Common myeloid progenitor, CD34-positive (primary cell): ENCODE measurements at regions of chr12 and their contacts with region 1.

Region 1: GRCh38 chr12:121443193-121443870 is 43.4 kb downstream of the RNF34 start:
- DNase-seq: peak; percentile 35 to 57 (median 46)
- H3K4me3 ChIP-seq: no peak overlapping the region
- H3K27ac ChIP-seq: no peak overlapping the region
- H3K4me1 ChIP-seq: no peaks in the 10 kb centered on the region
- H3K27me3 ChIP-seq: no peaks in the 10 kb centered on the region

Region 2: DNA sequence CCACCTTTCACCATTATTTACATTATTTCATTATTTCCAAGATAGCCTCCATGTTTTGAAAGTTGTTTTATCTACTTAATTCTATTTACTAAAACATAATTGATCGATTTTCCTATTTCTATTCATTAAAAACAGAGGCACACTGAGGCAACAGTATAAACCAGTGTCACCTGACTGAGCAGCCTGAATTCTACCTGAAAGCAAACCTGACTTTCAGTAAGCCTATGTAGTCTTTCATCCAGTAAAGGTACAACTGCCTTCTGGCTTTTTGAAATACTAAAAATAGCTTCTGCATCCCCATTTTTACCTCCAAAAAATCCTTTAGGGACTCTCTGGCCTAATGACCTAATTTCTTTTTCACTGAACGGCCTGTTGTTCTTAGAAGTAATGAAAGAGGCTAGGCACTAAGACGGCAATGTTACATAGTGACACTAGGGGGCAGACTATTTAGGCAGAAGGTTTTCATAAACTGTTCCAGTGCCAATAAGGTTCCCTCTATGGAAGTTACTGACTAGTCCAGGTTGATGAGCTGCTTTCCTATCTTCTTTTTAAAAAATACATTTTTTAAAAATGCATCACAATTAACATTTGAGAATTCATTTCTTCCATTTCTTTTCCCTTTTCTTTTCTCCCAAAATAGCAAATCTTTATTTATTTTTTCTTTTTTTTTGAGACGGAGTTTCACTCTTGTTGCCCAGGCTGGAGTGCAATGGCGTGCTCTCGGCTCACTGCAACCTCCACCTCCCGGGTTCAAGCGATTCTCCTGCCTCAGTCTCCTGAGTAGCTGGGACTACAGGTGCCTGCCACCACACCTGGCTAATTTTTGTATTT is 108.6 kb before region 1 on chr12:
- CTCF ChIA-PET with region 1: interaction called, 123 read pairs
- POLR2A ChIA-PET with region 1: interaction called, 3 read pairs
- DNase-seq: peak; percentile 74 to 86 (median 85)
- H3K4me3 ChIP-seq: no peak overlapping the region
- H3K27ac ChIP-seq: peak overlapping the region in 1 of 2 experiments; percentile 55
- H3K4me1 ChIP-seq: peaks cover 0 to 3% (median 0%) of the 10 kb centered on the region in 4 experiments
- H3K27me3 ChIP-seq: no peaks in the 10 kb centered on the region

Region 3: DNA sequence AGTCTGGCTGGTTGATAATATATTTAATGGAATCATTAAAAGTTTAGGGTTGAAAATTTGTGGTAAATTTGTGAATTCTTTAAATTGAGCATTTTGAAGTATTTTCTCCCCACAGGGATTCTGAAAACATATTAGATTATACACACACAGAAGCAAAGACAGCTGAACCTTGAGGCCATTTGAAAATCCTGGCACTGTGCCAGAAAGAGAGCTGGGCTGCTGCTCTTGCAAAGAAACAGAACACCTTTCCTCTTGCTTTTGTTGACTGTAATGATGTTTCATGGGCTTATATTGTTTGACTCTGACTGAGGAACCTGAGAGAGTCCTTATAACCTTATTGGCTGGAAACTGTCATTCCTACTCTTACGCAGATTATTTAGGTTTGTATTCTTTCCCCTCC is 38.6 kb before region 1 on chr12:
- CTCF ChIA-PET with region 1: interaction called, 12 read pairs
- POLR2A ChIA-PET with region 1: interaction called, 3 read pairs
- DNase-seq: peak in 2 of 3 donors; percentile 10 to 17
- H3K4me3 ChIP-seq: no peak overlapping the region
- H3K27ac ChIP-seq: no peak overlapping the region
- H3K4me1 ChIP-seq: peaks cover 7 to 16% (median 13%) of the 10 kb centered on the region in 4 experiments
- H3K27me3 ChIP-seq: no peaks in the 10 kb centered on the region

Region 4: DNA sequence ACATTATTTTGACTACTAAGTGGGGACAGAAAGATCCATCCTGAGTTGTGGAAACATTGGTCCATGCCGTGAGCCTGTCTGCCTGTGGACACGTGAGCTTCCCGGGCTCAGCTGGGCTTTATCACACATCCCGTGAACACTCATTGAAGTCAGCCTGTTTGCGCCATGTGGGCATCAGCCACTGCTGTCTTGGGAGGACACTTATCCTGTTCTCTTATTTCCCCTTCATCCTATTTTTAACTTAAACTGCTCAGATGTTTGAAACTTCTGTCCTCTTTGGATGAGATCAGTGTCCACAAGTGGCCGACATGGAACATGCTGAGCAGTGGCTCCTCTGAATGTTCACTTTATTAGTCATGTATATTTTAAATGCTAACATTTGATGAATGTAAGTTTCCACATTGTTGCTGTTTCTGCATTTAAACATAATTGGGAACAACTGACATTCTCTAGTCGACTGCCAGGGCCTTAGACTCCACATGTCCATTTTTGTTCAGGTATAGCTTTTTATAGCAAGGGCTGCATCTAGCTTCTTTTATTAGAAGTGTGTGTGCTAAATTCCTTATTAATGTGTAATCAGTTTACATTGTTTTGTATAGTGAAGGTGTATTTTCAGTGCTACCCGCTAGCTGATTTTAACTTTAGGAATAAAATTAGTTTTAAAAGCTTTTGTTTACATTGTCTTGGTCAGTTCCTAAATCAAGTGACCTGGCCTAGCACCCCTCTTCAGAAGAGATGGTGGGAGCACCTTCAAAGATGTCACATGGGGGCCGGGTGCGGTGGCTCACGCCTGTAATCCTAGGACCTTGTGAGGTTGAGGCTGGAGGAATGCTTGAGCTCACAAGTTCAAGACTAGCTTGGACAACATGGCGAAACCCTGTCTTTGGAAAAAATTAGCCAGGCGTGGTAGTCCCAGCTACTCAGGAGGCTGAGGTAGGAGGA is 19.4 kb before region 1 on chr12:
- CTCF ChIA-PET with region 1: interaction called, 18 read pairs
- POLR2A ChIA-PET with region 1: no interaction called
- DNase-seq: no peak
- H3K4me3 ChIP-seq: no peak overlapping the region
- H3K27ac ChIP-seq: no peak overlapping the region
- H3K4me1 ChIP-seq: peaks cover 0 to 26% (median 7%) of the 10 kb centered on the region in 4 experiments
- H3K27me3 ChIP-seq: no peaks in the 10 kb centered on the region

Region 5: DNA sequence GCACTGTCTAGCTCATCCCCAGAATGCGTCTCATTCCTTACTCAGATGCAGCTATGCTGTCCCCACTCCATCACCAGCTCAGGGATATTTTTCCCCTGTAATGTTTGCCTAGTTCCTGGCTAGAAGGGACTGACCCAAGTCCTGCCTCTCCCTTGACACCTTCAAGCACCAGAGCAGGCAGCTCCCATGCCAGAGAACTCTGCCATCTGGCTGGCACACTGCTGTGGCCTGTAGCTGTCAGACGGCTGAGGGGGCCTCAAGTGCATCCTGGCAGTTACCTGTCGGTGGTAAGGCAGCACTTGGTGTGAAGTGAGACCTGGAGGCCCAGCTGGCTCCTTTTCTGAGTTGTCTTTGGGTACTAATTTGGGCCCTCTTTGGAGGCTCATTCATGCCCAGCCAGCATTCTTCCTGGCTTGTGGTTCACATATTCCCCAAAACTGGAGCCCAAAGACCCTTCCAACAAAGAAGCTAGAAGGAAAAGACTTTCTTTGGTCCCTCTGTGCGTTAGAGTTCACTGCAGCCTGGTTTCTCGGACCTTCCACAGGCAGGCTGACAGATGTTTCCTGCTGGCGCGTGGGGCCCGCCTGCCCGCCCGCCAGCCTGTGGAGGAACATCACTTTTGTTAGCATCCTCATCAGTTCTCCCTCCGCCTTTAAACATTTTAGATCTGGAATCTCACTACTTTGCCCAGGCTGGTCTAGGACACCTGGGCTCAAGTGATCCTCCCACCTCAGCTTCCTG is 10.4 kb before region 1 on chr12:
- CTCF ChIA-PET with region 1: interaction called, 32 read pairs
- POLR2A ChIA-PET with region 1: no interaction called
- DNase-seq: peak in 2 of 3 donors; percentile 70 to 84
- H3K4me3 ChIP-seq: no peak overlapping the region
- H3K27ac ChIP-seq: peak overlapping the region in 1 of 2 experiments; percentile 31
- H3K4me1 ChIP-seq: peaks cover 0 to 15% (median 11%) of the 10 kb centered on the region in 4 experiments
- H3K27me3 ChIP-seq: no peaks in the 10 kb centered on the region

Region 6: DNA sequence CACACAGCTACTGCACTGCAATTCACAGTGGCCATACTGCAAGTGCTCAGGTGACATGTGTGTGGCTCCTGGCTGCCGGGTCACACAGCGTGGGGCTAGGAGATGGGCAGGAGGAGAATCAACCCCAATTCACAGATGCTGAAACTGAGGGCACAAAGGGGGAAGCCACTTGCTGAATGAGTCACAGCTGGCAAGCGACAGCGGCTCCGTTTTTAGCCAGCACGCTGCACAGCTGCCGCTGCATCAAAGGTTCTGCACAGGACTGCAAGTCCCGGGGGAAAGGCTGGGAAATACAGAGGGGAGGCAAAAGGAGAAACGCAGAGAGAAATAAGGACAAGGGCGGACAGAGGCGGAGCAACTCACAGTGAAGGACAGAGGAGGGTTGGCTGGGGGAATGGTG is 79.6 kb after region 1 on chr12:
- CTCF ChIA-PET with region 1: no interaction called
- POLR2A ChIA-PET with region 1: no interaction called
- DNase-seq: no peak
- H3K4me3 ChIP-seq: no peak overlapping the region
- H3K27ac ChIP-seq: no peak overlapping the region
- H3K4me1 ChIP-seq: no peaks in the 10 kb centered on the region
- H3K27me3 ChIP-seq: no peaks in the 10 kb centered on the region